ENCODE measurements at regions of chr2 and their contacts with region 1.

Region 1: GRCh38 chr2:227238238-227239237 is 74.1 kb downstream of the COL4A3 start:
- DNase-seq: peak in 2 of 3 donors; percentile 67 to 88
- ATAC-seq: peak; percentile 53
- H3K4me3 ChIP-seq: no peak overlapping the region
- H3K4me1 ChIP-seq: no peaks in the 10 kb centered on the region
- CTCF ChIP-seq: peak; percentile 92

Region 2: DNA sequence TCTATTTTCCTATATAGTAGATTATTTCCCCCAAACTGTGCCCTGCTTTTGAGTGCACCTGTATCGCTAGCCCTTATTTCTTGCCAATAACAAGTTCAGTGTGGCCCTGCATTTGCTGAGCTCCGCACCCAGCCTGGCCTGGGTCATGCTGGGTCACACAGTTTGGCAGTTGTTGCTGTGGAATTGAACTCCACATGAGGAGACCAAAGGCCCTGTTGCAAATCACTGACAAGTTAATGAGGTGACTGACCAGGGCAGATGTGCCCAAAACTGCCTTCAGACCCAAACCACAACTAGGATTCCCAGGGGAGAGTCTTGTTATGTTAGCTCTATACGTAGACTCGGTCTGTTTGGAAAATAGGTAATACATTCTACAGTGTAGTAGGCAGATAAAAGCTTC is 105.6 kb before region 1 on chr2:
- intact Hi-C with region 1: loop called (anchors 1 to 5 kb)
- DNase-seq: no peak
- ATAC-seq: no peak
- H3K4me3 ChIP-seq: no peak overlapping the region
- H3K4me1 ChIP-seq: no peaks in the 10 kb centered on the region
- CTCF ChIP-seq: no peak

Region 3: GRCh38 chr2:227450926-227451654 is 212.6 kb after region 1 on chr2:
- intact Hi-C with region 1: no loop called
- DNase-seq: peak in 1 of 3 donors; percentile 27
- ATAC-seq: peak; percentile 68
- H3K4me3 ChIP-seq: no peak overlapping the region
- H3K4me1 ChIP-seq: peaks cover 17% of the 10 kb centered on the region
- CTCF ChIP-seq: no peak

Region 4: GRCh38 chr2:227766373-227766883 is 527.9 kb after region 1 on chr2:
- intact Hi-C with region 1: no loop called
- DNase-seq: peak; percentile 74 to 90 (median 84)
- ATAC-seq: peak; percentile 80
- H3K4me3 ChIP-seq: no peak overlapping the region
- H3K4me1 ChIP-seq: peaks cover 15% of the 10 kb centered on the region
- CTCF ChIP-seq: peak; percentile 63